BJ (cell line): ENCODE measurements at regions of chr5 and their contacts with region 1.

Region 1: GRCh38 chr5:78467752-78468357 is 107.4 kb downstream of the SCAMP1 start:
- DNase-seq: peak; percentile 12
- H3K4me3 ChIP-seq: no peak overlapping the region
- H3K27me3 ChIP-seq: no peaks in the 10 kb centered on the region
- CTCF ChIP-seq: peak; percentile 61

Region 2: DNA sequence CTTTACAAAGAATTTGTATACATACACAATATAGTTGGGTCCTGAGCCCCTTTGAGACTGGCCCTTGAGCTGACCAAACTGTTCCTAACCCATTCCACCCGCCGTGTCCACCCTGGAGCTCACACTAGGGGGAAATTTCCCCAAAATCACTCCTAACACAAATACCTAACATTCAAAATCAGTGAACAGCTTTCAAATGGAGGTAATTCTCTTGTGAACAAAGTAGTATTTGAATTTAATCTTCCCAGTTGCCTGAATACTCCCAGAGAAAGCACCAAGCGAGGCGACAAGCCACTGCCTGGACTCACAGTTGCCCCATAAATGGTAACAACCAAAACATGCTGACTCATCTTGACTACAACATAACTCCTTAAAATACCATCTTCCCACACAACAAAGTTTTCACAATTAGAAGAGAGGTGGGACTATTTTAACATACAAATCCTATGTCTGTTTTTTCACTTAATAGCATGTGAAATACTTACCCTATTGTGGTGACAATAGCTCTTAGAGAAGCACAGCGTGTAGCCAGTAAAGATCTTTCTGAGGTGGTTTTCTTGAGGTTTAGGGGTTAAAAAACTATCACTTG is 139.2 kb before region 1 on chr5:
- CTCF ChIA-PET with region 1: no interaction called
- POLR2A ChIA-PET with region 1: no interaction called
- DNase-seq: peak; percentile 22
- H3K4me3 ChIP-seq: no peak overlapping the region
- H3K27me3 ChIP-seq: 0 out of 2 replicates have a peak, but pooled peaks cover 1% of the 10 kb centered on the region
- CTCF ChIP-seq: no peak

Region 3: GRCh38 chr5:78509145-78509865 is 41.5 kb after region 1 on chr5:
- CTCF ChIA-PET with region 1: interaction called, 10 read pairs
- POLR2A ChIA-PET with region 1: no interaction called
- DNase-seq: no peak
- H3K4me3 ChIP-seq: no peak overlapping the region
- H3K27me3 ChIP-seq: no peaks in the 10 kb centered on the region
- CTCF ChIP-seq: no peak

Region 4: GRCh38 chr5:78577071-78577807 is 109.4 kb after region 1 on chr5:
- CTCF ChIA-PET with region 1: no interaction called
- POLR2A ChIA-PET with region 1: no interaction called
- DNase-seq: no peak
- H3K4me3 ChIP-seq: no peak overlapping the region
- H3K27me3 ChIP-seq: no peaks in the 10 kb centered on the region
- CTCF ChIP-seq: no peak